Activated naive CD4-positive, alpha-beta T cell treated with anti-CD3 and anti-CD28 coated beads, Interleukin-2, amount 10 ng/mL, durations not matched to agents 7 days and 5 days (primary cell): ENCODE measurements at regions of chr2 and their contacts with region 1.

Region 1: DNA sequence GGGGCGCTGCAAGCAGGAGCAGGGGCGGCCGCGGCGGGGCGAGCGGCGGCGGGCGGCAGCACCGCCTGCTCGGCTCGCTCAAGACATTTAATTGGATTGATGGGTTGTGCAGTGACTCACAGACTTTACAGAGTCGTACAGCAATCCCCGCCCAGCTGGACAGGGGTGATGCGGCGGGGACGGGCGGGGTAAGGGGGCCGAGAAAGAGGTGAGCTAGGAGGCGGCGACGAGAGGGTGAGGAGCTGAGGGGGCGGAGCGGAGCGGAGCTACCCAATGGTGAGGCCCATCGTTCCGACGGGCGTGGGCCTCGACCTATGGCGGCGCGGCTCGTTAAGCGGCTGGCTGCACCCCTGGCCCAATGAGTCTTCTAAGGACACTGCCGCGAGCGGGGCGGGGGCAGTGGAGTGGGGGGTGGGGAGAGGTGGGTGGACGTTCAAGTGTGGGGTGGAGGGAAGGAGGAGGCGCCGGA is 97.1 kb upstream of the SERTAD2 start:
- DNase-seq: peak; percentile 98
- H3K4me3 Mint-ChIP-seq: peak overlapping the region; percentile 82
- H3K27ac Mint-ChIP-seq: peak overlapping the region; percentile 89
- H3K4me1 Mint-ChIP-seq: peaks cover 26% of the 10 kb centered on the region
- H3K27me3 Mint-ChIP-seq: peaks cover 3% of the 10 kb centered on the region

Region 2: GRCh38 chr2:64767670-64768468 is 17.0 kb after region 1 on chr2:
- CTCF ChIA-PET with region 1: interaction called, 13 read pairs
- DNase-seq: peak; percentile 84
- H3K4me3 Mint-ChIP-seq: peak overlapping the region; percentile 84
- H3K27ac Mint-ChIP-seq: peak overlapping the region; percentile 93
- H3K4me1 Mint-ChIP-seq: peaks cover 31% of the 10 kb centered on the region
- H3K27me3 Mint-ChIP-seq: peaks cover 25% of the 10 kb centered on the region